PC-9 (cell line): ENCODE measurements at regions of chr22 and their contacts with region 1.

Region 1: GRCh38 chr22:41381329-41382097 is at the start of gene TEF:
- DNase-seq: peak; percentile 94 to 98
- H3K4me3 ChIP-seq: peak within 1 kb of the TSS; percentile 85
- H3K27ac ChIP-seq: peak within 1 kb of the TSS; percentile 96
- H3K4me1 ChIP-seq: peaks cover 21% of the 10 kb centered on the region
- H3K27me3 ChIP-seq: no peaks in the 10 kb centered on the region
- CTCF ChIP-seq: no peak
- total RNA-seq, gene TEF: 19.4 and 28.2 TPM in 2 replicates

Region 2: DNA sequence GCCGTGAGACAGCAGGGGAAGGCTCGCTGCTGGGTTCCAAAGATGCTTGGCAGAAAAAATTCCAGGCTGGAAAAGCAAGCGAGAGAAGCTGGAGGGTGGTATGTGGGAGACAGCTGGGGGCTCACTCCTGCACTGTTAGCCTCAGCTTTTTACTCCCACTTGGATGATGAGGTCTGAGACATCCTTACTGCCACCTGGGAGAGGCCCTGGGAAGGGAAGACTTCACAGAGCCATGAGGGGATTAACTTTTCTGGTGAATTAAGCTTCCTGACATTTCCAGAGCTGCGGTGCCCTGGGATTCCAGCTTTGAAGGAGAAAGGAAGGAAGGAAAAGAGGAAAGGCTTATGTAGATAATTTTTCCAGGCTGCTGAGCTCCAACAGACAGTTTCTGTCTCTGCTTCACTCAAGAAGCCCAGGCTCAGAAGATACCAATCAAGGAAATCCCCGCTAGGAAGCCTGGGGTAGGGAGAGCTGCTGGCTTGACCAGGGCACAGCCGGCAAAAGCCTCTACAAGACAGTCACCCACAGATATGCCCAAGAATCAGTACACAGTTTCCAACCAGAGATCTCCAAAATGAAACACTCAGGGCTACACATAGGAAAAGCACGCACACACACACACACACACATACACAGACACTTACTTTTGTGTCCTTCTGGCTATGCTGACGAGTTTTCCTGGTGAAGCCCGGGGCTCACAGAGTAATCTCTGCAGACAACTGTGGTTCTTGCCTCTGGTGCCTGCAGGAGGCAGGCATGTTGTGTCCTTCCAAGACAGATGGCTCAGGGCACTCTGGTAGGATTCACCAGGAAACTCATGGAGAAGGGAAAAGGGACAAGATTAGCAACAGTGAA is 701.3 kb before region 1 on chr22:
- CTCF ChIA-PET with region 1: no interaction called
- POLR2A ChIA-PET with region 1: interaction called, 11 read pairs
- intact Hi-C with region 1: no loop called
- DNase-seq: no peak
- H3K4me3 ChIP-seq: no peak overlapping the region
- H3K27ac ChIP-seq: no peak overlapping the region
- H3K4me1 ChIP-seq: peaks cover 13% of the 10 kb centered on the region
- H3K27me3 ChIP-seq: no peaks in the 10 kb centered on the region
- CTCF ChIP-seq: no peak

Region 3: GRCh38 chr22:41140365-41140957 is 241.1 kb before region 1 on chr22:
- CTCF ChIA-PET with region 1: no interaction called
- POLR2A ChIA-PET with region 1: interaction called, 10 read pairs
- intact Hi-C with region 1: no loop called
- DNase-seq: no peak
- H3K4me3 ChIP-seq: no peak overlapping the region
- H3K27ac ChIP-seq: no peak overlapping the region
- H3K4me1 ChIP-seq: no peaks in the 10 kb centered on the region
- H3K27me3 ChIP-seq: no peaks in the 10 kb centered on the region
- CTCF ChIP-seq: no peak

Region 4: DNA sequence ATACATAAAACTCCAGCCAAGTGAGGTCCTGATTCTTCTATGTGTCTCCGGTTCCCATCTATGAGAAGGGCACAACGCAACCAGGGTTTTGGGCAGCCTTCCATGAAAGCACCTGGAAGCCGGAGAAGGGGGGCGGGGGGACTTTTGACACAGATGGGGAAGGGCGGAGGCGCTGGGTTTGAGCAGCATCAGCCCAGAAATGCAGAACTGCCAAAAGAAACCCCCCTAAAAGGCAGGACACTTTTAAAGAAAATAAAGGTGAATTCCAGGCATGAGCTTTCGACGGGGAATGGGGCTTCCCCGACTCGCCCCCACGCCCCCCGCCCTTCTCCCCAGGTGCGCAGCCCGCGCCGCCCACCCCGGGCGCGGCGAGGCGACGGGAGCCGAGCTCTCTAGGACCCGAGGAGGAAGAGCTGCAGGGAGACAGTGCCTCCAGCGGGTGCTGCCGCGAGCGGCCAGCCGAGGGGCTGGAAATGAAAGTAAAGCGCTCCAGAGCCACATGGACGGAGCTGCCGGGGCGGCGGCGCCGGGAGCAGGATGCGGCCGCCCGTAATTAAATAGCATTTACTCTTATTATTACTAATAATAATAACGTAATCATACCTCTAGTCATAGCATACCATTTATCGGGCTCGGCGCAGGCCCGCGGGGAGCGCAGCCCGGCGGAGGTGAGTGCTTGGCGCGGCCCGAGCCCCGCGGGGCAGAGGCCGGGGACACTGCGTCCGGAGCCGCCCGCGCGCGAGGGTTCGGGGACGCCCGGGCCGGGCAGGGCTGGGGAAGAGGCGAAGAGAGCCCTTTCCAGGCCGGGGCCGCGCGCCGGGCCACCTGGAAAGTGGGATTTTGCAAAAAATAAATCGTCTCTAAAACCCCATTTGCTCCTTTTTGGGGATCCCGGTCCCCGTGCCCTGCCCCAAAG is 80.2 kb before region 1 on chr22 and contains the start of gene ZC3H7B:
- CTCF ChIA-PET with region 1: no interaction called
- POLR2A ChIA-PET with region 1: interaction called, 4 read pairs
- intact Hi-C with region 1: loop called (anchors 5 kb)
- DNase-seq: peak; percentile 77 to 79
- H3K4me3 ChIP-seq: peak within 1 kb of the TSS; percentile 99
- H3K27ac ChIP-seq: peak within 1 kb of the TSS; percentile 1; the same call in 1 of the 2 replicates
- H3K4me1 ChIP-seq: peaks cover 37% of the 10 kb centered on the region
- H3K27me3 ChIP-seq: no peaks in the 10 kb centered on the region
- CTCF ChIP-seq: peak; percentile 63
- total RNA-seq, gene ZC3H7B: 54.5 and 62.7 TPM in 2 replicates

Region 5: DNA sequence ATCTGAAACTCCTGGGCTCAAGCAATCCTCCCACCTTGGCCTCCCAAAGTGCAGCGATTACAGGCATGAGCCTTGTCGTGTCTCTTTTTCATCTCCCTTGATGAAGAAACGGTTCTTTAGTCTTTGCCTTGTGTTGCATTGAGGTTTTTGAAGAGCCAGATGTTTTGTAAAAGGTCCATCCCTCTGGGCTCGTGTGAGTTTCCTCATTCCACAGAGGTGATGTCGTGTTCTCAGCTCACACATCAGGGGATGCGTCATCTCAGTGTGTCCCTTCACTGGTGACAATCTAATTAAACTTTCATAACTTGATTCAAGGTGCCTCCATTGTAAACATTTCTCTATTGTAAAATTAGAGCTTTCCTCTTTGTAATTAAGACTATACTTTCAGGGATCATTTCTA is 29.5 kb before region 1 on chr22:
- CTCF ChIA-PET with region 1: no interaction called
- POLR2A ChIA-PET with region 1: interaction called, 4 read pairs
- intact Hi-C with region 1: loop called (anchors 1 kb)
- DNase-seq: peak; percentile 50 to 64
- H3K4me3 ChIP-seq: no peak overlapping the region
- H3K27ac ChIP-seq: 0 out of 2 replicates have a peak overlapping the region, but pooled peaks have one; percentile 21
- H3K4me1 ChIP-seq: no peaks in the 10 kb centered on the region; the same call in 1 of the 2 replicates
- H3K27me3 ChIP-seq: no peaks in the 10 kb centered on the region
- CTCF ChIP-seq: no peak

Region 6: GRCh38 chr22:41448189-41448808 is 66.8 kb after region 1 on chr22:
- CTCF ChIA-PET with region 1: no interaction called
- POLR2A ChIA-PET with region 1: interaction called, 11 read pairs
- intact Hi-C with region 1: loop called (anchors 2 kb)
- DNase-seq: peak; percentile 93 to 99
- H3K4me3 ChIP-seq: peak overlapping the region; percentile 92
- H3K27ac ChIP-seq: peak overlapping the region; percentile 83
- H3K4me1 ChIP-seq: peaks cover 12% of the 10 kb centered on the region
- H3K27me3 ChIP-seq: no peaks in the 10 kb centered on the region
- CTCF ChIP-seq: no peak

Region 7: DNA sequence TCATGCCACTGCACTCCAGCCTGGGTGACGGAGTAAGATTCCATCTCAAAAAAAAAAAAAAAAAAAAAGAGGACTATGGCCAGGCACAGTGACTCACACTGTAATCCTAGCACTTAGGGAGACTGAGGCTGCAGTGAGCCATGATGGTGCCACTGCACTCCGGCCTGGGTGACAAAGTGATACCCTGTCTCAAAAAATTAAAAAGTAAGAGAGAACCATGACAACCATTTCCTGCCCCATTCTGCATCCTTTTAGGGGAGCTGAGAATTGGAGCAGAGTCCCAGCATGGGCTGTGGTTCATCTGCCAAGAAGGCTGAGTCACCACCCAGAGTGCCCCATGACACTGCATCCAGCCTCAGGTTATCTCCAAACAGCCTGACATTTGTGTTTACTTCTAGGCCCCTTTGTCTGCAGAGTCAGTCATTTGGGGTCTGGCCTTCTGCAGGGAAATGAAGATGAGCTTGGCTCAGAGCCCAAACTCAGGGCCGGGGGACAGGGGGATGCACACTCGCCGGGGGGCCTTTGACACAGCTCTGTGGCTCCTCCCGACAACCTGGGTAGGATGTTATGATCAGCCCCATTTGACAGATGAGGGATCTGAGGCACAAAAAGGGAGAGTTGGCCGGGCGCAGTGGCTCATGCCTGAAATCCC is 184.0 kb after region 1 on chr22:
- CTCF ChIA-PET with region 1: interaction called, 16 read pairs
- POLR2A ChIA-PET with region 1: no interaction called
- intact Hi-C with region 1: no loop called
- DNase-seq: peak; percentile 71 to 73
- H3K4me3 ChIP-seq: no peak overlapping the region
- H3K27ac ChIP-seq: peak overlapping the region; percentile 43
- H3K4me1 ChIP-seq: peaks cover 38% of the 10 kb centered on the region
- H3K27me3 ChIP-seq: no peaks in the 10 kb centered on the region
- CTCF ChIP-seq: no peak

Region 8: GRCh38 chr22:42079319-42080251 is 698.1 kb after region 1 on chr22 and contains the start of gene SMDT1:
- CTCF ChIA-PET with region 1: no interaction called
- POLR2A ChIA-PET with region 1: no interaction called
- intact Hi-C with region 1: no loop called
- DNase-seq: peak; percentile 95 to 98
- H3K4me3 ChIP-seq: peak within 1 kb of the TSS; percentile 85
- H3K27ac ChIP-seq: peak within 1 kb of the TSS; percentile 81
- H3K4me1 ChIP-seq: peaks cover 14% of the 10 kb centered on the region
- H3K27me3 ChIP-seq: no peaks in the 10 kb centered on the region
- CTCF ChIP-seq: no peak
- total RNA-seq, gene SMDT1: 55.3 and 72.8 TPM in 2 replicates